ENCODE measurements at regions of chr1 and their contacts with region 1.

Region 1: GRCh38 chr1:64366821-64367220 is 103.1 kb upstream of the CACHD1 start:
- DNase-seq: no peak
- ATAC-seq: no peak
- H3K4me3 ChIP-seq: no peak overlapping the region
- H3K4me3 Mint-ChIP-seq: no peak overlapping the region
- H3K27ac ChIP-seq: no peak overlapping the region
- H3K27ac Mint-ChIP-seq: no peak overlapping the region
- H3K4me1 ChIP-seq: no peaks in the 10 kb centered on the region
- H3K4me1 Mint-ChIP-seq: no peaks in the 10 kb centered on the region
- H3K27me3 ChIP-seq: no peaks in the 10 kb centered on the region
- H3K27me3 Mint-ChIP-seq: no peaks in the 10 kb centered on the region
- CTCF ChIP-seq: no peak

Region 2: GRCh38 chr1:63679076-63679475 is 687.7 kb before region 1 on chr1:
- CTCF ChIA-PET with region 1: no interaction called
- POLR2A ChIA-PET with region 1: no interaction called
- intact Hi-C with region 1: no loop called
- DNase-seq: no peak
- ATAC-seq: no peak
- H3K4me3 ChIP-seq: no peak overlapping the region
- H3K4me3 Mint-ChIP-seq: no peak overlapping the region
- H3K27ac ChIP-seq: no peak overlapping the region
- H3K27ac Mint-ChIP-seq: no peak overlapping the region
- H3K4me1 ChIP-seq: no peaks in the 10 kb centered on the region
- H3K4me1 Mint-ChIP-seq: no peaks in the 10 kb centered on the region
- H3K27me3 ChIP-seq: no peaks in the 10 kb centered on the region
- H3K27me3 Mint-ChIP-seq: no peaks in the 10 kb centered on the region
- CTCF ChIP-seq: no peak

Region 3: GRCh38 chr1:64343105-64343887 is 23.5 kb before region 1 on chr1:
- CTCF ChIA-PET with region 1: no interaction called
- POLR2A ChIA-PET with region 1: no interaction called
- intact Hi-C with region 1: no loop called
- DNase-seq: no peak
- ATAC-seq: no peak
- H3K4me3 ChIP-seq: no peak overlapping the region
- H3K4me3 Mint-ChIP-seq: no peak overlapping the region
- H3K27ac ChIP-seq: no peak overlapping the region
- H3K27ac Mint-ChIP-seq: no peak overlapping the region
- H3K4me1 ChIP-seq: no peaks in the 10 kb centered on the region
- H3K4me1 Mint-ChIP-seq: no peaks in the 10 kb centered on the region
- H3K27me3 ChIP-seq: no peaks in the 10 kb centered on the region
- H3K27me3 Mint-ChIP-seq: no peaks in the 10 kb centered on the region
- CTCF ChIP-seq: no peak

Region 4: DNA sequence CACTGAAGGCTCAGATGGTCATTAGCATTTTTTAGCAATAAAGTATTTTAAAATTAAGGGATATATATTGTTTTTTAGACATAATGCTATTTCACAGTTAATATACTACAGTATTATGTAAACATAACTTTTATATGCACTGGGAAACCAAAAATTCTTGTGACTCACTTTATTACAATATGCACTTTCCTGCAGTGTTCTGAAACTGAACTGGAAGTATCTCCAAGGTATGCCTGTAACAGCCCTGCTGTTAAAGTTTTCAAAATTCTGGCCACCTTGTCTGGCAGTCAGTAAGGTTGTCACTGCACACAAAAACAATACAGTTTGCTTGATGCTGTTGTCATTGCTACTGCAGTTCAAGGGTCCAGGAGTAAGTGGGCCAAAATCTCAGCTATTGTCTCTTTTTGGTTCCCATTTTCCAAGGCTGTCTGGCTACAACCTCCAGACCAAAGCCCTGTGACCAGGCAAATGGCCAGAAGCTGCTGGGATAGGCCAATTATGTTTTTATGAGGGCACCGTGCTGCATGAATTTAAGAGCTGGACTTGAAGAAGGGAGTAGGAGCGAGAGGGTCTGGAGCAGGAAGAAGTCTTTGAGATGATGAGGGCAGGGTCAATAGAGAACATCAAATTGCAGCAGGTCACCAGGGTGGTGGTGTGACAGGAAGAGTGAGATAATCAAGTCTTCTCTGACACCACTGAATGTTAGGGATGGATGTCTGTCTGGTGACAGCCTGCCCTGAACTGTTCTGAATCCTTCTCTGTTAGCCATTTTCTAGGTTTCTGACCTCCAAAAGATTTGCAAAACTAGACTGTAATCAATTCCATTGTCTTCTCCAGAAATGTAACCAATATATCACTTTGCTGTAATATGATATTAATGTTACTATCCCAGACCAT is 20.8 kb after region 1 on chr1:
- CTCF ChIA-PET with region 1: no interaction called
- POLR2A ChIA-PET with region 1: no interaction called
- intact Hi-C with region 1: loop called in 1 of 2 experiments (anchors 1 kb)
- DNase-seq: no peak
- ATAC-seq: no peak
- H3K4me3 ChIP-seq: no peak overlapping the region
- H3K4me3 Mint-ChIP-seq: no peak overlapping the region
- H3K27ac ChIP-seq: no peak overlapping the region
- H3K27ac Mint-ChIP-seq: no peak overlapping the region
- H3K4me1 ChIP-seq: no peaks in the 10 kb centered on the region
- H3K4me1 Mint-ChIP-seq: no peaks in the 10 kb centered on the region
- H3K27me3 ChIP-seq: no peaks in the 10 kb centered on the region
- H3K27me3 Mint-ChIP-seq: peaks cover 18% of the 10 kb centered on the region
- CTCF ChIP-seq: no peak